Activated CD4-positive, alpha-beta T cell treated with anti-CD3 and anti-CD28 coated beads, Interleukin-2, amount 10 ng/mL, durations not matched to agents 24 days and 14 days (primary cell): ENCODE measurements at regions of chr19 and their contacts with region 1.

Region 1: GRCh38 chr19:11987405-11988281 is 22.8 kb downstream of the ZNF763 start:
- DNase-seq: peak; percentile 96
- H3K4me3 Mint-ChIP-seq: peak overlapping the region; percentile 99
- H3K27ac Mint-ChIP-seq: peak overlapping the region; percentile 96
- H3K4me1 Mint-ChIP-seq: peaks cover 19% of the 10 kb centered on the region
- H3K27me3 Mint-ChIP-seq: no peaks in the 10 kb centered on the region

Region 2: DNA sequence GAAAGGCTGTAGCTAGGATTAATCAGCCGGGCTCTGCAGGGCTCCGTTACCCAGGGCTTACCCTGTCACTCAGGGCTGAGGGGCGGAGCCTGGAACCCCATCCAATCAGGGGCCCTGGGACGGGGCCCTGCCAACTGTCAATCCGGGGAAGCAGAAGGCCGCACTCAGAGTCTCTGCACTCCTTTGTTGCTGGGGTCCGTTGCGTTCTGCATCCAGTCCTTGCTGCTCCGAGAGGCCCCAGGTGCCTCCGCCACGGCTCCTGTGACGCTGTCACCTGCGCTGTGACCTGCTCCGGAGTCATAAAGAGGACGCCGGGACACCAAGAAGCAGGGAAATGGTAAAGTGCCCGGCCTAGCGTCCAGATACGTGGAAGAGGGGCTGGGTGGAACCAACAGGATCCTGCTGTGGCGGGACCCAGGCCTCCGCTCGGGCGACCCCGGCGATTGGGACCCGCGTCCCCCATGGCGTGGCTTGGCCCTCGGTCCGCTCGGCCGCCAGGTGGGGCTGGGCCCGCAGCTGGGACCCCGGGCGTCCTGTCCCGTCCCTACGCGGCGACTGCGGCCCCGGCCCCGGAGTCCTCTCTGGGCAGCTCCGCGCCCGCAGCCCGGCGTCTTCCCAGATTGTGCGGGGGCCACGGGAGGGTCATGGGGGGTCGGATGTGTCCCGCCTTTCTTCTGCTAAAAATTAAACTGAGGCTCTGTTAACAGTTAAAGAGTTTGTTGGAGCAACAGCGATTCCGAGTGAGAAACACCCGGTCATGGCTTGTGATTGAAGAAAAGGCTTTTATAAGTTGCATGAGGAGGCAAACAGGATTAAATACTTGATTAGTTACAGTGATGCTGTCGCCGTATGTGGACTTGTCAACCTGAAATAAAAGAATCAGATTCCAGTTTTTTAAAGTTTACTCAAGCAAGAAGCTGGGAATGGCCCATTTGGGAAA is 189.0 kb before region 1 on chr19 and contains the start of gene ZNF491:
- intact Hi-C with region 1: loop called (anchors 1 kb)
- DNase-seq: peak; percentile 91
- H3K4me3 Mint-ChIP-seq: peak within 1 kb of the TSS; percentile 84
- H3K27ac Mint-ChIP-seq: peak within 1 kb of the TSS; percentile 84
- H3K4me1 Mint-ChIP-seq: peaks cover 9% of the 10 kb centered on the region
- H3K27me3 Mint-ChIP-seq: no peaks in the 10 kb centered on the region
- total RNA-seq, gene ZNF491: 0.12 and 0.68 TPM in 2 replicates

Region 3: GRCh38 chr19:11814029-11814699 is 173.5 kb before region 1 on chr19 and contains the start of gene ZNF440:
- intact Hi-C with region 1: loop called (anchors 5 kb)
- DNase-seq: peak; percentile 97
- H3K4me3 Mint-ChIP-seq: peak within 1 kb of the TSS; percentile 93
- H3K27ac Mint-ChIP-seq: peak within 1 kb of the TSS; percentile 78
- H3K4me1 Mint-ChIP-seq: peaks cover 9% of the 10 kb centered on the region
- H3K27me3 Mint-ChIP-seq: no peaks in the 10 kb centered on the region
- total RNA-seq, gene ZNF440: 7.4 and 10.5 TPM in 2 replicates

Region 4: GRCh38 chr19:11881151-11881800 is 106.4 kb before region 1 on chr19:
- intact Hi-C with region 1: loop called (anchors 2 kb)
- DNase-seq: peak; percentile 88
- H3K4me3 Mint-ChIP-seq: no peak overlapping the region
- H3K27ac Mint-ChIP-seq: no peak overlapping the region
- H3K4me1 Mint-ChIP-seq: peaks cover 2% of the 10 kb centered on the region
- H3K27me3 Mint-ChIP-seq: peaks cover 2% of the 10 kb centered on the region

Region 5: GRCh38 chr19:11964858-11965645 is 22.6 kb before region 1 on chr19 and contains the start of gene ZNF763:
- intact Hi-C with region 1: loop called (anchors 1 kb)
- DNase-seq: peak; percentile 93
- H3K4me3 Mint-ChIP-seq: peak within 1 kb of the TSS; percentile 83
- H3K27ac Mint-ChIP-seq: peak within 1 kb of the TSS; percentile 78
- H3K4me1 Mint-ChIP-seq: peaks cover 16% of the 10 kb centered on the region
- H3K27me3 Mint-ChIP-seq: no peaks in the 10 kb centered on the region
- total RNA-seq, gene ZNF763: 0.31 and 0.51 TPM in 2 replicates

Region 6: DNA sequence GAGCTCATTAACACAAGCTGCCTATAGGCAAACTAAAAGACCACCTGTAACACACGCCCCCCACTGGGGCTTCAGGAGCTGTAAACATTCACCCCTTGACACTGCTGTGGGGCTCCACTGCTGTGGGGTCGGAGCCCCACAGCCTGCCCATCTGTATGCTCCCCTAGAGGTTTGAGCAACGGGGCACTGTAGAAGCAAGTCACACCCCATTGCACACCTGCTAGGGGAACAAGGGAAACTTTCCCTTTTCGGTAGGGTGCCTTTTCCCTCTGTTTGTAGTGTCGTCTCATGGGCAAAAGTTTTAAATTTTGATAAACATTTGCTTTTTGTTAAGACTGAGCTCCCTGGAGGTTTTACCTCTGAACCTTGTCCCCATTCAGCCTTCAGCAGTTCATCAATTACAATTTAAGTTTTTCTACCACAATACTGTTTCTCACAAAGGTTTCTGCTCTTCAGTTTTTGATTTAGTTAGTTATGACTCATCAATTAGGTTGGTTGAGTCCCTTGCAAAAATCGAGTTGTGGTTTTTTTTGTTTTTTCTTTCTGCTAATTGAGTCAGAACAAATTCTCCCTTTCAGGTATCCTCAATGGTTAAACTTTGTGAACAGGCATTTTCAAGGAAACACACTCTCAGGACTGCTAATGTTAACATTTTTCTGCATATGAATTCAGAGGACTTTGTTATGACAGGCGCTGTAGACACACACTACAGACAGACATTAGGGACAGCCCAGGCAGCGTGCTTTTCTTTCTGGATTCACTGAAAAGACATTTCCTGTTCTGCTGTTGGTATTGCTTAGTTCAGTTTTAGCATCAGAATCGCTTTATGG is 12.7 kb after region 1 on chr19:
- intact Hi-C with region 1: no loop called
- DNase-seq: no peak
- H3K4me3 Mint-ChIP-seq: peak overlapping the region; percentile 1
- H3K27ac Mint-ChIP-seq: peak overlapping the region; percentile 45
- H3K4me1 Mint-ChIP-seq: peaks cover 16% of the 10 kb centered on the region
- H3K27me3 Mint-ChIP-seq: no peaks in the 10 kb centered on the region

Region 7: DNA sequence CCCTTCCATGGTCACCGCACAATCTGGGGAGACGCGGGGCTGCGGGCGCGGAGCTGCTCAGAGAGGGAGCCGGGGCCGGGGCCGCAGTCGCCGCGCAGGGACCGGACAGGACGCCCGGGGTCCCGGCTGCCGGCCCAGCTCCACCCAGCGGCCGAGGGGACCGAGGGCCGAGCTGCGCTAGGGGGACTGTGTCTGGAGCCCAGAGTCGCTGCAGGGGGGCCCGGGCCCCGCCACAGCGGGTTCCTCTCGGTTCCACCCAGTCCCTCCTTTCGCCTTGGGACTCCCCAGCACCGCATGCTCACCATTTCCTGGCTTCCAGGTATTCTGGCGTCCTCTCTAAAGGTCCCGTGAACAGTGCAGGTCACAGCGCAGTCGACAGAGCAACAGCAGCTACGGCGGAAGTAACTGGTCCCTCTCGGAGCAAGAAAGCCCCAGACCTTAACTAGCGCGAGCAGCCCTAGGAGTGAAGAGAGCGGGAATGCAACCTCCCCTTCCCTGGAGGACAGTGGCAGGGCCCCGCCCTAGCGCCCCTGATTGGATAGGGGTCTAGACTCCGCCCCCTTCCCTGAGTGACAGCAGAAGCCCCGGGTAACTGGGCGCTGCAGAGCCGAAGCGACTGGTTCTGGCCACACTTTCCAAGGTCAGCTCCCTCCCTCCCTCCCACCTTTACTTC is 65.0 kb after region 1 on chr19 and contains the start of gene ZNF878:
- intact Hi-C with region 1: no loop called
- DNase-seq: peak; percentile 76
- H3K4me3 Mint-ChIP-seq: peak within 1 kb of the TSS; percentile 83
- H3K27ac Mint-ChIP-seq: peak within 1 kb of the TSS; percentile 62
- H3K4me1 Mint-ChIP-seq: peaks cover 5% of the 10 kb centered on the region
- H3K27me3 Mint-ChIP-seq: peaks cover 2% of the 10 kb centered on the region
- total RNA-seq, gene ZNF878: 0.21 and 0.49 TPM in 2 replicates

Region 8: GRCh38 chr19:12139885-12140547 is 152.4 kb after region 1 on chr19 and contains the start of gene ZNF20:
- intact Hi-C with region 1: loop called (anchors 1 kb)
- DNase-seq: peak; percentile 97
- H3K4me3 Mint-ChIP-seq: peak within 1 kb of the TSS; percentile 90
- H3K27ac Mint-ChIP-seq: peak within 1 kb of the TSS; percentile 84
- H3K4me1 Mint-ChIP-seq: peaks cover 28% of the 10 kb centered on the region
- H3K27me3 Mint-ChIP-seq: no peaks in the 10 kb centered on the region
- total RNA-seq, gene ZNF20: 2.0 and 2.1 TPM in 2 replicates

Region 9: GRCh38 chr19:12162882-12163806 is 175.5 kb after region 1 on chr19 and contains the start of gene ZNF136:
- intact Hi-C with region 1: loop called (anchors 1 kb)
- DNase-seq: peak; percentile 98
- H3K4me3 Mint-ChIP-seq: peak within 1 kb of the TSS; percentile 95
- H3K27ac Mint-ChIP-seq: peak within 1 kb of the TSS; percentile 96
- H3K4me1 Mint-ChIP-seq: peaks cover 28% of the 10 kb centered on the region
- H3K27me3 Mint-ChIP-seq: no peaks in the 10 kb centered on the region
- total RNA-seq, gene ZNF136: 9.4 and 10.3 TPM in 2 replicates

Region 10: DNA sequence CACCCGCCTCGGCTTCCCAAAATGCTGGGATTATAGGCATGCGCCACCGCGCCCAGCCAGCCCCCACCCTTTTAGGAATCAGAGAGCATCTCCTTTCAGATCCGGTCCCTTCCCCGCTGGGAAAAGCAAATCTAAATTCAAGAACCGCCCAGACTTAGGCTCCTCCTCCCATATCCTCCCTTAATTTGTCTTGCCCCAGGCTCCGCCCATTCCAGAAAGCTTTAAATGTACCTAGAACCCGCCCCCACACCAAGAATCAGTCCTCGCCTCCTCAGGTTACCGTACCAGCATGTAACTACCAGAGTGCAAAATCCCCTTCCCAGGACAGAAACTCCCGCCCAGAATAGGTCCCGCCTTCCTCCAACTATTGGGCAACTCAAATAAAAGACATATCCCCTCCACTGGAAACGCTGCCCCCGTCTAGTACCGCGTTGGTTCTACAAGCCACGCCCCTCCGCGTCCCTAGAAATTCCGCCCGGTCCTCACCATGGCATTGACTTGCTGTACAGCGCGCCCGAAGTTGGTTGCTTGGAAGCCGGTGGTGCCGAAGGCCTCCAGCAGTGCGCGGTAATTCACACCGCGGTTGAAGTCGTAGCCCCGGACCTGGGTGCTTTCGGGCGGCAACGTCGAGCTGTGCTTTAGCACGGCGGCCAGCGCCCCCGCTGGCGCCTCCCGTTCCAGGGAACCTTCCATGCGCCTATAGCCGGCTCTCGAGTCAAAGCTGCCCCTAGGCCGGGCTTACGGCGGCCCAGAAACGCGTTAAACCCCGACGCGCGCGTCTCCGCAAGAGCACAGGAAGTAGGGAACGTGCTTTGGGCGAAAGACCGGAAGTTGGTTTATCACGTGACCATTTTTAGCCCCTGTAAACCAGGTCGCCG is 693.7 kb after region 1 on chr19 and contains the start of gene DHPS:
- intact Hi-C with region 1: no loop called
- DNase-seq: peak; percentile 97
- H3K4me3 Mint-ChIP-seq: peak within 1 kb of the TSS; percentile 94
- H3K27ac Mint-ChIP-seq: peak within 1 kb of the TSS; percentile 92
- H3K4me1 Mint-ChIP-seq: peaks cover 20% of the 10 kb centered on the region
- H3K27me3 Mint-ChIP-seq: no peaks in the 10 kb centered on the region
- total RNA-seq, gene DHPS: 138 and 155 TPM in 2 replicates